Breast epithelium (tissue), 4 donors: ENCODE measurements at regions of chr3 and their contacts with region 1.

Region 1: DNA sequence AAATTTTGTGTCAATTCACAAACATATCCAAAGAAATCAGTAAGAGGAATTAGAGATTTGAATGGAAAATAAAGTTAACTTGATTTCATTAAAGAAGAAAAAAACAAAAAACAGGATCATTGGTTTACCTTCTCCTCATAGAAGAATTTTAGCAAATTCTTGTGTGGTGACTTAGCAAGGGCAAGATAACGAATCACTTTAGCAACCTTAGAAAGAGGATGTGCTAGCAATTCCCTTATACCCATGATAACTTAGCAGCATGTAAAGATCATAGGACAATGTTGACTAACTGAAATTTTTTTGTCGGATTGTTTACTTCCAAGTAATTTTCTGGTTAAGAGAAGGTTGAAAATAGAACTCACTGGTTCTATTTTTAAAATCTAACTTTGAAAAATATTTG is 609.3 kb downstream of the GBE1 start:
- DNase-seq: no peak
- H3K4me3 ChIP-seq: no peak overlapping the region
- H3K27ac ChIP-seq: no peak overlapping the region
- H3K4me1 ChIP-seq: no peaks in the 10 kb centered on the region
- H3K27me3 ChIP-seq: no peaks in the 10 kb centered on the region
- CTCF ChIP-seq: no peak
- POLR2A ChIP-seq: no peak

Region 2: GRCh38 chr3:80836395-80836794 is 315.8 kb before region 1 on chr3:
- intact Hi-C with region 1: no loop called
- DNase-seq: no peak
- H3K4me3 ChIP-seq: no peak overlapping the region
- H3K27ac ChIP-seq: no peak overlapping the region
- H3K4me1 ChIP-seq: no peaks in the 10 kb centered on the region
- H3K27me3 ChIP-seq: no peaks in the 10 kb centered on the region
- CTCF ChIP-seq: no peak
- POLR2A ChIP-seq: no peak

Region 3: GRCh38 chr3:81173514-81173913 is 21.4 kb after region 1 on chr3:
- intact Hi-C with region 1: loop called (anchors 2 kb)
- DNase-seq: no peak
- H3K4me3 ChIP-seq: no peak overlapping the region
- H3K27ac ChIP-seq: no peak overlapping the region
- H3K4me1 ChIP-seq: no peaks in the 10 kb centered on the region
- H3K27me3 ChIP-seq: no peaks in the 10 kb centered on the region
- CTCF ChIP-seq: no peak
- POLR2A ChIP-seq: no peak